CD4-positive, alpha-beta T cell (primary cell): ENCODE measurements at regions of chr11 and their contacts with region 1.

Region 1: DNA sequence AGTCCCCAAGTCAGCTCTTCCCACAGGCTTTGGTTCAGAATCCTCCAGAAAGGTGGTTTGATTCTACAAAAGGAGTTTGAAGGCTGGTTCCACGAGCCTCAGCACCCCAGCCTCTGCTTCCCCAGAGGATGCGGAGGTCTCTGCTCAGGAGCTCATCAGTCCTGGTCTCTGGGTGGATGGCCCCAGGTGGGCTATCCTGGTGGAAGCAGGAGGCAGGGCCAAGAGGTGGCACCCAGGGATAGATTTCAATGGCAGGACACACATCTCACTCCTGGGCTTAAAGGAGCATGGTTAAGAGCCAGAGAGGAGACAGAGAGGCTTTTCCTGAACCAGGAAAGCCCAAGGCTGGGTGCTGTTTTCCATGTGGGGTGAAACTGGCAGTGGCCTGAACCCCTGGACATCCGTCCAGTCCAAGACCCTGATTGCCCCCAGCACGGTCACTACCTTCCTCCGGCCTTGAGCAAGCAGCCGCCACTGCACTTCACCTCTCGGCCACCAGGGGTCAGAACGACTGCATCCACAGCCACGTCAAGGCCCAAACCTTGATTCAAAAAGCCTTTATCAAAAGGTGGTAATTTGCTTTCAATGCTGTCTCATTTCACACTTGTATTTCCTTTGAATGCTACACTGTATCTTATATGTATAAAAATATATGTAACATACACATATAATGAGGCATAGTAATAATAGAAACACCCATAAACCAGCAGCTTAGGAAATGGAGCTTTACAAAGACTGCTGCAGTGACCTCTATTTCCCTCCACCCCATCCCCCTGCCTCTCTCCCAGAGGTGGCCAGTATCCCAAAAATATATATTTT is 19.3 kb upstream of the FXYD2 start:
- DNase-seq: peak; percentile 67 to 91 (median 82)
- ATAC-seq: peak; percentile 91
- H3K4me3 ChIP-seq: no peak overlapping the region
- H3K4me3 Mint-ChIP-seq: no peak overlapping the region
- H3K27ac ChIP-seq: no peak overlapping the region
- H3K27ac Mint-ChIP-seq: no peak overlapping the region
- H3K4me1 ChIP-seq: peaks cover 18% of the 10 kb centered on the region
- H3K4me1 Mint-ChIP-seq: no peaks in the 10 kb centered on the region
- H3K27me3 ChIP-seq: no peaks in the 10 kb centered on the region
- H3K27me3 Mint-ChIP-seq: no peaks in the 10 kb centered on the region
- CTCF ChIP-seq: peak; percentile 98

Region 2: DNA sequence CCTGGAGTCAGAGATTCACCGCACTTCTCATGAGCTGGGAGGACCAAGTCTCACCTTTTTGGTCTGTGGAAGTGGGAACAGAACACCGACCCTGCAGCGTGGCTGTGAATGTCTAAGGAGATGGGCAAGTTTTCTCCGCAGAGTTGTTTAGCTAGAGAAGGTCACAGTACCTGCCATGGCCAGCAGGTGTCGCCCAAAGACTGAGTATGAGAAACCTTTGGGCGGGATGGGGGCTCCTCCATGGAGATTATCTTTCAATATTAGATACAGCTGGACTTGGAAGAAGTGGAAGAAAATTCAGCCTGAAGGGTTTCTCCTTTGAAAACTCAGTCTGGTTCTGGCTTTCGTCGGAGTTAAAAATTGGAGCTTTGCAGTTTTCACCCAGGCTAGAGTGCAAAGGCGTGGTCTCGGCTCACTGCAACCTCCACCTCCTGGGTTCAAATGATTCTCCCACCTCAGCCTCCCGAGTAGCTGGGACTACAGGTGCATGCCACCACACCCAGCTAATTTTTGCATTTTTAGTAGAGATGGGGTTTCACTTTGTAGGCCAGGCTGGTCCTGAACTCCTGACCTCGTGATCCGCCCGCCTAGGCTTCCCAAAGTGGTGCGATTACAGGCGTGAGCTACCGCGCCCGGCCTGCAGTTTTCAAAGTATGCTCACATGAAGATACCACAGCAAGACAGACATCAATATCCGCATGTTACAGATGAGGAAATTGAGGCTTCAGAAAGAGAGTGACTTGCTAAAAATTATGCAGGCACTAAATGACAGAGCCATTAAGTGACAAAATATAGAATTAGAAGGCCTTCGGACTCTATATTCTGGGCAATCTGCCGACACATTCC is 36.2 kb before region 1 on chr11:
- CTCF ChIA-PET with region 1: interaction called, 5 read pairs
- POLR2A ChIA-PET with region 1: no interaction called
- intact Hi-C with region 1: loop called in 1 of 2 experiments (anchors 1 kb)
- DNase-seq: peak; percentile 55 to 88 (median 72)
- ATAC-seq: peak; percentile 85
- H3K4me3 ChIP-seq: no peak overlapping the region
- H3K4me3 Mint-ChIP-seq: no peak overlapping the region
- H3K27ac ChIP-seq: no peak overlapping the region
- H3K27ac Mint-ChIP-seq: no peak overlapping the region
- H3K4me1 ChIP-seq: peaks cover 21% of the 10 kb centered on the region
- H3K4me1 Mint-ChIP-seq: peaks cover 13% of the 10 kb centered on the region
- H3K27me3 ChIP-seq: no peaks in the 10 kb centered on the region
- H3K27me3 Mint-ChIP-seq: no peaks in the 10 kb centered on the region
- CTCF ChIP-seq: peak; percentile 94

Region 3: GRCh38 chr11:117817368-117818040 is 26.4 kb before region 1 on chr11:
- CTCF ChIA-PET with region 1: interaction called, 14 read pairs
- POLR2A ChIA-PET with region 1: no interaction called
- intact Hi-C with region 1: no loop called
- DNase-seq: peak; percentile 70 to 92 (median 84)
- ATAC-seq: peak; percentile 16
- H3K4me3 ChIP-seq: no peak overlapping the region
- H3K4me3 Mint-ChIP-seq: peak overlapping the region; percentile 38
- H3K27ac ChIP-seq: no peak overlapping the region
- H3K27ac Mint-ChIP-seq: peak overlapping the region; percentile 87
- H3K4me1 ChIP-seq: peaks cover 67% of the 10 kb centered on the region
- H3K4me1 Mint-ChIP-seq: peaks cover 50% of the 10 kb centered on the region
- H3K27me3 ChIP-seq: no peaks in the 10 kb centered on the region
- H3K27me3 Mint-ChIP-seq: no peaks in the 10 kb centered on the region
- CTCF ChIP-seq: peak; percentile 97

Region 4: GRCh38 chr11:118171269-118172062 is 327.6 kb after region 1 on chr11:
- CTCF ChIA-PET with region 1: no interaction called
- POLR2A ChIA-PET with region 1: no interaction called
- intact Hi-C with region 1: loop called in 1 of 2 experiments (anchors 10 kb)
- DNase-seq: peak; percentile 53 to 88 (median 66)
- ATAC-seq: peak; percentile 99
- H3K4me3 ChIP-seq: no peak overlapping the region
- H3K4me3 Mint-ChIP-seq: no peak overlapping the region
- H3K27ac ChIP-seq: no peak overlapping the region
- H3K27ac Mint-ChIP-seq: no peak overlapping the region
- H3K4me1 ChIP-seq: peaks cover 8% of the 10 kb centered on the region
- H3K4me1 Mint-ChIP-seq: peaks cover 5% of the 10 kb centered on the region
- H3K27me3 ChIP-seq: peaks cover 0 to 2% of the 10 kb centered on the region in 2 experiments
- H3K27me3 Mint-ChIP-seq: peaks cover 11% of the 10 kb centered on the region
- CTCF ChIP-seq: peak; percentile 94

Region 5: GRCh38 chr11:118338637-118339061 is 494.8 kb after region 1 on chr11:
- CTCF ChIA-PET with region 1: no interaction called
- POLR2A ChIA-PET with region 1: no interaction called
- intact Hi-C with region 1: no loop called
- DNase-seq: peak; percentile 61 to 96 (median 86)
- ATAC-seq: peak; percentile 66
- H3K4me3 ChIP-seq: peak overlapping the region; percentile 86
- H3K4me3 Mint-ChIP-seq: peak overlapping the region; percentile 97
- H3K27ac ChIP-seq: peak overlapping the region; percentile 90
- H3K27ac Mint-ChIP-seq: peak overlapping the region; percentile 98
- H3K4me1 ChIP-seq: peaks cover 62% of the 10 kb centered on the region
- H3K4me1 Mint-ChIP-seq: peaks cover 70% of the 10 kb centered on the region
- H3K27me3 ChIP-seq: no peaks in the 10 kb centered on the region
- H3K27me3 Mint-ChIP-seq: no peaks in the 10 kb centered on the region
- CTCF ChIP-seq: no peak